H1 (cell line): ENCODE measurements at regions of chr6 and their contacts with region 1.

Region 1: DNA sequence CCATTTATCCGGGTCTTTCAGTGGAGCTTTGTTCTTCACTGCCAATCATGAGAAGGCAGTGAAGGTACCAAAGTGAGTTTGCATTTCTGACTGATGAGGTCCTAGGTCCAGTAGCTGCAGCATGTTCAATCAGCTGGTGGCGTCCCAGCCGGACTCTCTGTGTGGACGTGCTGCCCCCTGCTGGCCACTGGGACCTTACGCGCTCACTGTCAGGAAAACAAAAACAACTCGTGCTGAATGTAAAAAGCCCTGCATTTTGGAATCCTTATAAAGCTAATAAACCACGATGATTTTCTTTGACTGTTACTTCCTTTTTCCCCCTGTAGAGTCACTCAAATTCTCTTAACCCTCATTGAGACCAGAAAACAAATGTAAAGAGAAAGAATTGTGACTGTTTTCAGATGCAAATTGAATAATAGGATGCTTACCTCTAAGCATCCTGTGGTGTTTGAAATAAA is 4.9 kb upstream of the CD24 start:
- DNase-seq: peak; percentile 94 to 95
- H3K4me3 ChIP-seq: 0 out of 8 replicates have a peak overlapping the region, but pooled peaks of 1 of the 4 experiments have one; percentile 7
- H3K27ac ChIP-seq: no peak overlapping the region
- H3K4me1 ChIP-seq: peaks cover 0 to 12% (median 4%) of the 10 kb centered on the region in 4 experiments; a peak in 4 of 7 replicates
- H3K27me3 ChIP-seq: no peaks in the 10 kb centered on the region
- CTCF ChIP-seq: peak; percentile 90 to 98 (median 94)
- EP300 ChIP-seq: peak in 1 of 2 experiments; percentile 51; a peak in 1 of 3 replicates
- POLR2A ChIP-seq: no peak
- RAD21 ChIP-seq: peak; percentile 97 to 99

Region 2: GRCh38 chr6:106569428-106569827 is 410.0 kb before region 1 on chr6:
- CTCF ChIA-PET with region 1: interaction called, 14 read pairs
- POLR2A ChIA-PET with region 1: no interaction called
- DNase-seq: no peak
- H3K4me3 ChIP-seq: no peak overlapping the region
- H3K27ac ChIP-seq: no peak overlapping the region
- H3K4me1 ChIP-seq: peaks cover 0 to 3% (median 1%) of the 10 kb centered on the region in 4 experiments; a peak in 2 of 7 replicates
- H3K27me3 ChIP-seq: no peaks in the 10 kb centered on the region
- CTCF ChIP-seq: no peak
- EP300 ChIP-seq: no peak
- POLR2A ChIP-seq: no peak
- RAD21 ChIP-seq: no peak

Region 3: GRCh38 chr6:106997390-106998158 is 18.1 kb after region 1 on chr6:
- CTCF ChIA-PET with region 1: interaction called, 36 read pairs
- POLR2A ChIA-PET with region 1: no interaction called
- DNase-seq: peak in 1 of 2 experiments; percentile 86
- H3K4me3 ChIP-seq: no peak overlapping the region
- H3K27ac ChIP-seq: no peak overlapping the region
- H3K4me1 ChIP-seq: peaks cover 0 to 8% (median 2%) of the 10 kb centered on the region in 4 experiments; a peak in 3 of 7 replicates
- H3K27me3 ChIP-seq: no peaks in the 10 kb centered on the region
- CTCF ChIP-seq: peak; percentile 80 to 97 (median 90)
- EP300 ChIP-seq: no peak
- POLR2A ChIP-seq: no peak
- RAD21 ChIP-seq: peak; percentile 91 to 93

Region 4: DNA sequence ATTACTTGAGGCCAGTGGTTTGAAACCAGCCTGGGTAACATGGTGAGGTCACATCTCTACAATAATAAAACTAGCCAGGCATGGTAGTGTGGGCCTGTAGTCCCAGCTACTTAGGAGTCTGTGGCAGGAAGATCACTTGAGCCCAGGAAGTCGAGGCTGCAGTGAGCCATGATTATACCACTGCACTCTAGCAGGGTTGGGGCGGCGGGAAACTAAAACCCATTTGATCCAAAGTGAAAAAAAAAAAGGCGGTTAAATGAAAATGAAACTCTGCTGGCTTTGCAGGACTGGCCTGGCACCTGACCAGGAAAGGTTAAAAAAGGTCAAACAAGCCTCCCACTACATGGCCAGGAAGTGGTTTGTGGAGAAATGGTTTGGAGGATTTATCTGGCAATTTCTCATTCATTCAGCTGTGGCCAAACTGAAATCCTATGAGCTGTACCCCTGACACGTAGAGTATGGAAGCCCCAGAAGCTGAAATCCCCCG is 85.2 kb after region 1 on chr6:
- CTCF ChIA-PET with region 1: no interaction called
- POLR2A ChIA-PET with region 1: no interaction called
- DNase-seq: no peak
- H3K4me3 ChIP-seq: no peak overlapping the region
- H3K27ac ChIP-seq: no peak overlapping the region
- H3K4me1 ChIP-seq: peaks cover 0 to 20% (median 12%) of the 10 kb centered on the region in 4 experiments; a peak in 6 of 7 replicates
- H3K27me3 ChIP-seq: no peaks in the 10 kb centered on the region
- CTCF ChIP-seq: no peak
- EP300 ChIP-seq: no peak
- POLR2A ChIP-seq: no peak
- RAD21 ChIP-seq: no peak